Calu3 (cell line): ENCODE measurements at regions of chr5 and their contacts with region 1.

Region 1: GRCh38 chr5:127867389-127867788 is 164.2 kb downstream of the CCDC192 start:
- DNase-seq: no peak
- H3K4me3 Mint-ChIP-seq: no peak overlapping the region
- H3K27ac Mint-ChIP-seq: no peak overlapping the region
- H3K4me1 Mint-ChIP-seq: peaks cover 54% of the 10 kb centered on the region
- H3K27me3 Mint-ChIP-seq: no peaks in the 10 kb centered on the region
- CTCF ChIP-seq: no peak

Region 2: DNA sequence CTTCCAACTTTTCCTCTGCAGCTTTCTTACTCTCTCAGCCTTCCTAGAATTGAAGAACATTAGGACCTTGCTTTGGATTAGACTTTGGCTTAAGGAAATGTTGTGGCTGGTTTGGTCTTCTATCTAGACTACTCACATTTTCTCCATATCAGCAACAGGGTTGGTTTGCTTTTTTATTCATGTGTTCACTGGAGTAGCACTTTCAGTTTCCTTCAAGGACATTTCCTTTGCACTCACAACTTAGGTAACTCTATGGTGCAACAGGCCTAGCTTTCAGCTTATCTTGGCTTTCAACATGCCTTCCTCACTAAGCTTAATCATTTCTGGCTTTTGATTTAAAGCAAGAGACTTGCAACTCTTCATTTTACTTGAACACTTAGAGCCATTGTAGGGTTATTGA is 11.1 kb before region 1 on chr5:
- CTCF ChIA-PET with region 1: interaction called, 21 read pairs
- intact Hi-C with region 1: no loop called
- DNase-seq: no peak
- H3K4me3 Mint-ChIP-seq: no peak overlapping the region
- H3K27ac Mint-ChIP-seq: peak overlapping the region; percentile 27
- H3K4me1 Mint-ChIP-seq: peaks cover 39% of the 10 kb centered on the region
- H3K27me3 Mint-ChIP-seq: no peaks in the 10 kb centered on the region
- CTCF ChIP-seq: no peak

Region 3: GRCh38 chr5:128083033-128083810 is 215.8 kb after region 1 on chr5 and contains the start of gene SLC12A2:
- CTCF ChIA-PET with region 1: no interaction called
- intact Hi-C with region 1: no loop called
- DNase-seq: peak; percentile 92
- H3K4me3 Mint-ChIP-seq: peak within 1 kb of the TSS; percentile 91
- H3K27ac Mint-ChIP-seq: peak within 1 kb of the TSS; percentile 87
- H3K4me1 Mint-ChIP-seq: peaks cover 51% of the 10 kb centered on the region
- H3K27me3 Mint-ChIP-seq: no peaks in the 10 kb centered on the region
- CTCF ChIP-seq: no peak
- total RNA-seq, gene SLC12A2: 393 and 576 TPM in 2 replicates